Heart left ventricle (tissue), 16 donors: ENCODE measurements at regions of chr7 and their contacts with region 1.

Region 1: GRCh38 chr7:67619175-67619574 is 622.5 kb downstream of the TYW1 start:
- DNase-seq: peak in 4 of 5 donors; percentile 19 to 39 (median 38)
- ATAC-seq: peak in 3 of 4 donors; percentile 24 to 69 (median 67)
- H3K4me3 ChIP-seq: peak overlapping the region in 3 of 12 donors; percentile 7 to 18 (median 7)
- H3K27ac ChIP-seq: peak overlapping the region in 10 of 12 donors; percentile 2 to 70 (median 54)
- H3K4me1 ChIP-seq: peaks cover 0 to 19% (median 5%) of the 10 kb centered on the region in 12 donors
- H3K27me3 ChIP-seq: peaks cover 0 to 29% (median 0%) of the 10 kb centered on the region in 9 donors
- CTCF ChIP-seq: peak in 2 of 12 donors; percentile 8 to 20
- POLR2A ChIP-seq: no peak

Region 2: GRCh38 chr7:67343572-67343971 is 275.6 kb before region 1 on chr7:
- intact Hi-C with region 1: no loop called
- DNase-seq: peak in 2 of 5 donors; percentile 18 to 48
- ATAC-seq: peak in 1 of 4 donors; percentile 23
- H3K4me3 ChIP-seq: no peak overlapping the region
- H3K27ac ChIP-seq: no peak overlapping the region
- H3K4me1 ChIP-seq: peaks cover 0 to 6% (median 0%) of the 10 kb centered on the region in 12 donors
- H3K27me3 ChIP-seq: no peaks in the 10 kb centered on the region
- CTCF ChIP-seq: no peak
- POLR2A ChIP-seq: no peak

Region 3: DNA sequence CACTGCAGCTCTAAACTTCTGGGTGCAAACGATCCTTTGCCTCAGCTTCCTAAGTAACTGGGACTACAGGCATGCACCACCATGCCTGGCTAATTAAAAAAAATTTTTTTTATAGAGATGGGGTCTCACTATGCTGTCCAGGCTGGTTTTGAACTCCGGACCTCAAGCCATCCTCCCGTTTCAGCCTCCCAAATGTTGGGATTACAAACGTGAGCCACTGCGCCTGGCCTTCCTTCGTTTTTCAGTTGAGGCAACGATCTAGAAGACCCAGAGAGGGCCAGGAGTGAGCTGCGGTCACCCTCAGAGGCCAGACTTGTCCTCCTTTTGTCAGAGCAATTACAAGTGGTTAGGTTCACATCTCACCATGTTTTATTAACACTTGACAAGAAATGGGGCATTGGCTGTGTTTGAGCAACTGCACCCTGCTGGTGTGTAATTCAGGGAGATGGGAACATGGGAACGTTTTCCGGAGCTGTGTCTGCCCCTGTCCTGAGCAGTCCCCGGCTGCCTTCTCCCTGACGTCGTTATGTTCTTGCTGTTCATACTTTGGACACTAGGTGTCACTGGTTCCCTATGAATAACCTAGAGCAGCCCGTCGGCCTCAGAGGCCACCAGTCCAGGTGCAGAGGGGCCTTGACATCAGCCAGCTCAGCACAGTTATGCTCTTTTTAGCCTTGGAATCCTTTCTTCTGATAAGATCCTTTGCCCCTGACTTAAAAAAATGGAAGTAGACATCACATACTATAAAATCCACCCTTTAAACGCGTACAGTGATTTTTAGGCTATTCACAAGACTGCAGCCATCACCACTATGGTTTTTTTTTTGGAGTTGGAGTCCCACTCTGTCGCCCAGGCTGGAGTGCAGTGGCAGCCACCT is 247.5 kb before region 1 on chr7:
- intact Hi-C with region 1: loop called in 1 of 10 experiments (anchors 10 kb)
- DNase-seq: peak in 4 of 5 donors; percentile 39 to 54 (median 46)
- ATAC-seq: peak; percentile 85 to 93 (median 92)
- H3K4me3 ChIP-seq: no peak overlapping the region
- H3K27ac ChIP-seq: no peak overlapping the region
- H3K4me1 ChIP-seq: no peaks in the 10 kb centered on the region
- H3K27me3 ChIP-seq: peaks cover 0 to 25% (median 5%) of the 10 kb centered on the region in 9 donors
- CTCF ChIP-seq: peak; percentile 70 to 90 (median 84)
- POLR2A ChIP-seq: no peak

Region 4: GRCh38 chr7:67518580-67518979 is 100.6 kb before region 1 on chr7:
- intact Hi-C with region 1: loop called in 3 of 10 experiments (anchors 5 kb)
- DNase-seq: peak; percentile 63 to 83 (median 72)
- ATAC-seq: peak; percentile 78 to 95 (median 92)
- H3K4me3 ChIP-seq: no peak overlapping the region
- H3K27ac ChIP-seq: peak overlapping the region in 9 of 12 donors; percentile 6 to 70 (median 46)
- H3K4me1 ChIP-seq: peaks cover 0 to 34% (median 17%) of the 10 kb centered on the region in 12 donors
- H3K27me3 ChIP-seq: no peaks in the 10 kb centered on the region
- CTCF ChIP-seq: no peak
- POLR2A ChIP-seq: no peak